Activated CD4-positive, alpha-beta T cell treated with anti-CD3 and anti-CD28 coated beads, Interleukin-2, amount 10 ng/mL, durations not matched to agents 24 days and 14 days (primary cell): ENCODE measurements at regions of chr13 and their contacts with region 1.

Region 1: DNA sequence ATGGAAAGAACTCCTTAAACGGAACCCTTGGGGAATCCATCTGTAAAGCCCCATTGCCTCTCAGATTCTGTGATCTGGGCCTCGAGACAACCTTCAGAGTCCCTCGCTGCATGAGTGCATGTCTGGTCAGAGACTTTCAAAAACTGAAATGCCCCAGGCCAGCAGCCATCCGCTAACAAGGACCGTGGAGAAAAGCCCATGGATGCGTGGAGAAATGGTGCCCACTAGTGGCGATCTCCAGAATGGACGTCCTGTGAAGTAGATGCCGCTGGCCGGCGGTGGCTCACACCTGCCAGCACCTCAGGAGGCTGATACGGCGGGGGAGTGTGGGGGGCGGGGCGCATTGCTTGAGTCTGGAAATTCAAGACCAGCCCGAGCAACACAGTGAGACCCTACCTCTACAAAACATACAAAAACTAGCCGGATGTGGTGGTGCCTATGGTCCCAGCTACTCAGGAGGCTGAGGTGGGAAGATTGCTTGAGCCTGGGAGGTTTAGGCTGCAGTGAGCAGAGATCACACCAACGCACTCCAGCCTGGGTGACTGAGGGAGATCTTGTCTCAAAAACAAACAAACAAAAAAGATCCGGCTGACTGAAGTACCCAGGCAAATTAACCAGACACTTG is 7.9 kb upstream of the CDC16 start:
- DNase-seq: peak; percentile 95
- H3K4me3 Mint-ChIP-seq: peak overlapping the region; percentile 37
- H3K27ac Mint-ChIP-seq: no peak overlapping the region
- H3K4me1 Mint-ChIP-seq: peaks cover 27% of the 10 kb centered on the region
- H3K27me3 Mint-ChIP-seq: peaks cover 14% of the 10 kb centered on the region

Region 2: DNA sequence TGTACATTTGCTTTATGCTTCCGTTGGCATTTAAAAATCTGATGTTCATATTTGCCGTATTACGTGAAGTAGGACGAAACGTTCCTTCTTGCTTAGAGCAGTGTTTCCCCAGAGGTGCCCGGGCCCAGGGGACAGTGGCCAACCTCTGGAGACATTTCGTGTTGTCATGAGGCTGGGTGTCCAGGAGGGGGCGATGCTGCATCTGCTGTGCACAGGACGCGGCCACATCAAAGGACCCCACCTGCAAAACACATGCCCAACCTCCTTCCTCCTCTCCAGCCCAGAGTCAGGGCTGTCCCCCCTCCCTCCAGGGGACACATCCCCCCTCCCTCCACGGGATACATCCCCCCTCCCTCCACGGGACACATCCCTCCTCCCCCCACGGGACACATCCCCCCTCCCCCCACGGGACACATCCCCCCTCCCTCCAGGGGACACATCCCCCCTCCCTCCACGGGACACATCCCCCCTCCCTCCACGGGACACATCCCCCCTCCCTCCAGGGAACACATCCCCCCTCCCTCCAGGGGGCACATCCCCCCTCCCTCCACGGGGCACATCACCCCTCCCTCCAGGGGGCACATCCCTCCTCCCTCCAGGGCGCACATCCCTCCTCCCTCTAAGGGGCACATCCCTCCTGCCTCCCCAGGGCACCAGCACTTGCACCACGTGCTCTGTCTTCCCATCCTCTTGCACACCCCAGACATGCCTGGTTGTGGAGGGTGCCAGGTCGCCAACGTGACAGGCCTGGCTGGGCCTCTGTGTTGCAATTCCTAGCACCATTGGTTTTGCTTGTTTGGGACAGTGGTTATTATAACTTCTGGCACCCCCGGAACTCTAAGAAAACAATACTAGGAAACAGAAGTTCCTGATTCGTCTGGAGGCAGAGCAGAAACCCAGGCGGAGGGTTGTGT is 409.6 kb before region 1 on chr13:
- intact Hi-C with region 1: loop called (anchors 1 kb)
- DNase-seq: peak; percentile 96
- H3K4me3 Mint-ChIP-seq: peak overlapping the region; percentile 98
- H3K27ac Mint-ChIP-seq: peak overlapping the region; percentile 78
- H3K4me1 Mint-ChIP-seq: peaks cover 17% of the 10 kb centered on the region
- H3K27me3 Mint-ChIP-seq: no peaks in the 10 kb centered on the region

Region 3: GRCh38 chr13:113951246-113951999 is 275.4 kb before region 1 on chr13:
- intact Hi-C with region 1: loop called (anchors 1 kb)
- DNase-seq: peak; percentile 84
- H3K4me3 Mint-ChIP-seq: no peak overlapping the region
- H3K27ac Mint-ChIP-seq: no peak overlapping the region
- H3K4me1 Mint-ChIP-seq: no peaks in the 10 kb centered on the region
- H3K27me3 Mint-ChIP-seq: no peaks in the 10 kb centered on the region

Region 4: DNA sequence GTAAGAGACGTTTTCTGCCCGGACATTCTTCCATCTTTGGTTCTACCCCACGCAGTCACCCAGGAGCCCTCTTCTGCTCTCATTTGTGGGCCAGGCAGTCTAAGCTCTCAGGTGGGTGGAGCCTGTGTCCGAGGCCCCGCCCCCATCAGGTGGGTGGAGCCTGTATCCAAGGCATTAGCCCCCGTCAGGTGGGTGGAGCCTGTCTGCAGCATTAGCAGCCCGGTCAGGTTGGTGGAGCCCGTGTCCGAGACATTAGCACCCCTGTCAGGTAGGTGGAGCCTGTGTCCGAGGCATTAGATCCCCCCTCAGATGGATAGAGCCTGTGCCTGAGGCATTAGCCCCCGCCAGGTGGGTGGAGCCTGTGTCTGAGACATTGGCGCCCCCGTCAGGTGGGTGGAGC is 207.4 kb before region 1 on chr13:
- intact Hi-C with region 1: no loop called
- DNase-seq: peak; percentile 79
- H3K4me3 Mint-ChIP-seq: no peak overlapping the region
- H3K27ac Mint-ChIP-seq: no peak overlapping the region
- H3K4me1 Mint-ChIP-seq: no peaks in the 10 kb centered on the region
- H3K27me3 Mint-ChIP-seq: no peaks in the 10 kb centered on the region

Region 5: DNA sequence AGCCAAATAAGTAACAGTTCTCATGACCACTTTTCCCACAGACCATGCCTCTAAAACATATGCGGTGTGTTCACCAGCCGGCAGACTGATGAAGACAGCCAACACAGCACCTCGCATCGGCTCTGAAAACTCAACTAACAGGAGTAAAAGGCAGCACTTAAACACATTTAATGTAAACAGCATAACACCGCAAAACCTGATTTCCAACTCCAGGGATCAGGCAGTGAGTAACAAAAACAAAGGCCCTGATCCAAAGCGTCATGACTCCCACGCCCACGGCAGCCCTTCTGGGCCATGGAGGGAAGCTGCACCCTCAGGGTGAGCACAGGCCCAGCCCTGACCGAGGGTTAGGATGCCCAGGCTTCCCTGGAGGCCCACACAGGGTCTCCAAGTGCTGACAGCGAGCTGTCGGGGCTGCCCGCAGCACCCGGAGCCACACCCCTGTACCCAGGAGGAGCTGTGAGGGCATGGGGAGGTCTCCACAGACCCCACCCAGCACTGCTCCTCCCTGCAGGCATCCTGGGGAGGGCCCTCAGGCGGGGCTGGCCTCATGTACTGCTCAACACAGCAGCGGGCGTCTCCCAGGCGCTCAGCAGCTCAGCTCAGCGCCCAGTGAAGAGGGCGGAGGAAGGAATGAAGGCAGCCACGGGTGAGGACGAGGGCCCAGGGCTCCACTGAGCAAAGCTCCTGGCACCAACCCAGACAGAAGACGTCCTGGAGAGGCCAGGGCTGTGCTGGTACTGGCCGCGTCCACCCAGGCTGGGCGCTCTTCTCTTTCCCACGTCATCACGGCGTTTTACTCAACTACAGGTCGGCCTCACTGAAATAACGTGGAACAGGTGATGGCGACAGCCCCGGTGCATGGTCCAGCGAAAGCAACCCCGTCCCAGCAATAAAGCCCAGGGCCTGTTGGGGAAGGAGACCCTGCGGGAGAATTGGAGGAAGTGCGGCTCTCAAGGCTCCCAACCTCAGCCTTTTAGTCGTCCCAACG is 148.1 kb before region 1 on chr13:
- intact Hi-C with region 1: no loop called
- DNase-seq: no peak
- H3K4me3 Mint-ChIP-seq: no peak overlapping the region
- H3K27ac Mint-ChIP-seq: no peak overlapping the region
- H3K4me1 Mint-ChIP-seq: peaks cover 8% of the 10 kb centered on the region
- H3K27me3 Mint-ChIP-seq: no peaks in the 10 kb centered on the region

Region 6: GRCh38 chr13:114148521-114148855 is 78.3 kb before region 1 on chr13:
- intact Hi-C with region 1: loop called (anchors 2 kb)
- DNase-seq: peak; percentile 97
- H3K4me3 Mint-ChIP-seq: peak overlapping the region; percentile 77
- H3K27ac Mint-ChIP-seq: peak overlapping the region; percentile 88
- H3K4me1 Mint-ChIP-seq: peaks cover 78% of the 10 kb centered on the region
- H3K27me3 Mint-ChIP-seq: no peaks in the 10 kb centered on the region

Region 7: DNA sequence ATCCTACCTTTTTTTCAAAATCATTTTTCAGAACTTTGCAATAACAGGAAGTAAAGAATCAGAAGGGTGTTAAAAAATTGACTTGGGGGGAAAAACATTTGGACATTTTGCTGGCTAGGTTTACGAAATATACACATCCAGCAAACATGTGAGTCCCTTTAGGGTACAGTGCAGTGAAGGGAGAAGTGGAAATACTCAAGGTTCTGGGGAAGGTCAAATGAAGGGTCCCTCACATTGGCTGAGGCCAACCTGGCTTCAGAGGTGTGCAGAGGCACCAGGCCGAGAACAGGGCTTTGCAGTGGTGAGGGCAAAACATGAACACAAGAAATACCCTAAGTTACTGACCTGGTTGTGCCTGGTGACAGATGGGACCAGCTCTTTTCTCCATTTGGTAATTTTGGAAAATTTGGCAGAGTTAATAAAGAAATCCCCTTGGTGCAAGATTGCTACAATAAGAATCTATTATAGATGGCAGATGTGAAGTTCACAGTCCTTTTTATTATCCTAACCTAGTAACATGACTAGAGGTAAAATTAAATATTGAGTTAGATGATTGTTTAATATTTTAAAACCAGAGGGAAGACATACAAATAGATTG is 53.0 kb after region 1 on chr13:
- intact Hi-C with region 1: no loop called
- DNase-seq: peak; percentile 63
- H3K4me3 Mint-ChIP-seq: peak overlapping the region; percentile 69
- H3K27ac Mint-ChIP-seq: peak overlapping the region; percentile 99
- H3K4me1 Mint-ChIP-seq: peaks cover 39% of the 10 kb centered on the region
- H3K27me3 Mint-ChIP-seq: no peaks in the 10 kb centered on the region